ENCODE measurements at regions of chr11 and their contacts with region 1.

Region 1: DNA sequence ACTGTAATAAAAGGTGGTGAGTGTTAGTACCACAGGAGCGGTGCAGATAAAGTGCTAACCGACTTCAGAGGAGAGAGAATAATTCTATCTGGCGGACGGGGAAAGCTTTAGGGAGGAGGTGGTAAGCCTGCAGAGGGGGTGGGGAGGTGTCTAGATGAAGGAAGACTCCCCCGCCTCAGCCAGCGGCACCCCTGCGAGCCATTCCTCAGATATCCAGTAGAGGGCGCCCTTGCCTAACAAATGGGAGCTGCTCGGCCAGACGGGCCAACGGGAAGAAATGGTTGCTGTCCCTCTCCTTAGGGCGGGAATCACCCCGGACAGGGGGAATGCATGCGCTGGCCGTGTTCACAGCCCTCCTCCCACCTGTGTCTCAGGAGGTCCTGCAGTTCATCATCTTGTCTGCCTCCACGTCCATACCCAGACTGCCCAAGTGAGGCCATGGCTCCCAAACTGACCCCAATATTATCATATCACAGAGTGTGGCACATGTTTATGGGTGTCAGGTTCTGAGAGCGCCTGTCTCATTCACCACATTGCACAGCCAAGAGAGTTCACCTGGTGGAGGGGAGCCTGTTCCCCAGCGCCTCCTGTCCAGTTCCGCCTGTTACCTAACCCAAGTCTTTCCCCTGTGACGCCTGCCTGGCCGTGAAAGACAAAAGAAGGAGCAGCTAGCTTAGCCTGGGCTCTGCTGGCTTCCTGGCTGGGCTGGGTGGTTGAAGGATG is 85.5 kb downstream of the ST3GAL4 start:
- H3K4me3 Mint-ChIP-seq: no peak overlapping the region
- H3K27ac Mint-ChIP-seq: no peak overlapping the region
- H3K4me1 Mint-ChIP-seq: peaks cover 7% of the 10 kb centered on the region
- H3K27me3 Mint-ChIP-seq: peaks cover 4% of the 10 kb centered on the region

Region 2: GRCh38 chr11:126480410-126481302 is 39.7 kb after region 1 on chr11:
- intact Hi-C with region 1: loop called (anchors 1 kb)
- H3K4me3 Mint-ChIP-seq: peak overlapping the region; percentile 27
- H3K27ac Mint-ChIP-seq: peak overlapping the region; percentile 54
- H3K4me1 Mint-ChIP-seq: peaks cover 16% of the 10 kb centered on the region
- H3K27me3 Mint-ChIP-seq: no peaks in the 10 kb centered on the region

Region 3: GRCh38 chr11:127493330-127494022 is 1052.5 kb after region 1 on chr11:
- intact Hi-C with region 1: loop called (anchors 10 kb)
- H3K4me3 Mint-ChIP-seq: no peak overlapping the region
- H3K27ac Mint-ChIP-seq: no peak overlapping the region
- H3K4me1 Mint-ChIP-seq: no peaks in the 10 kb centered on the region
- H3K27me3 Mint-ChIP-seq: no peaks in the 10 kb centered on the region

Measured in dendritic cell treated with granulocyte-macrophage colony-stimulating factor and Interleukin-4, amounts not matched to agents 40 ng/mL and 50 ng/mL, for 4 days (primary cell).